GM12878 (cell line): ENCODE measurements at regions of chr4 and their contacts with region 1.

Region 1: GRCh38 chr4:26081795-26082498 is 167.9 kb downstream of the SMIM20 start:
- DNase-seq: no peak
- ATAC-seq: peak; percentile 76
- H3K4me3 ChIP-seq: no peak overlapping the region
- H3K27ac ChIP-seq: no peak overlapping the region
- H3K4me1 ChIP-seq: peaks cover 44% of the 10 kb centered on the region
- H3K27me3 ChIP-seq: no peaks in the 10 kb centered on the region
- CTCF ChIP-seq: peak; percentile 56 to 61 (median 61)
- EP300 ChIP-seq: no peak
- POLR2A ChIP-seq: no peak
- RAD21 ChIP-seq: peak; percentile 74

Region 2: DNA sequence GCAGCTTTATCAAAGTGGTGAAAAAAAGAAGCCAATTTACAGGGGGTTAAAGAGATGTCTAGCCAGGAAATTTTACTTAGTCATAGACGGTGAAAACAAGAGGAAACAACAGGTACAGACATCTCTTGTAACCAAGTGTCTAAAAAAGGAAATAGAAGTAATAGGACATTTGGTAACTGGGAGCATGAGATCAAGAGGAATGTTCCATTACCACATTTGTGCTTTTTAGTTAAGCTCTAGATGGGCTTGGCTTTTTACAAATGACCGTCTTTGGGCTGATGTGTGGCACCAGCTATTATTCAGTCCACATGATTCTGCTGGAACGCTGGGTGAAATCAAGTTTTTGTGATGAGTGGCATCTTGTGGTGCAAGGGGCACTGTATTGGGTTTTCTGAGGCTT is 11.6 kb after region 1 on chr4:
- CTCF ChIA-PET with region 1: interaction called, 11 read pairs
- POLR2A ChIA-PET with region 1: no interaction called
- RAD21 ChIA-PET with region 1: interaction called, 27 read pairs
- SMC1A ChIA-PET with region 1: interaction called, 37 read pairs
- in situ Hi-C with region 1: no loop called
- intact Hi-C with region 1: no loop called
- DNase-seq: no peak
- ATAC-seq: no peak
- H3K4me3 ChIP-seq: no peak overlapping the region
- H3K27ac ChIP-seq: no peak overlapping the region
- H3K4me1 ChIP-seq: peaks cover 6% of the 10 kb centered on the region; the same call in 1 of the 2 replicates
- H3K27me3 ChIP-seq: no peaks in the 10 kb centered on the region
- CTCF ChIP-seq: no peak
- EP300 ChIP-seq: no peak
- POLR2A ChIP-seq: no peak
- RAD21 ChIP-seq: no peak

Region 3: GRCh38 chr4:26161030-26161824 is 79.3 kb after region 1 on chr4:
- CTCF ChIA-PET with region 1: interaction called, 43 read pairs
- POLR2A ChIA-PET with region 1: no interaction called
- RAD21 ChIA-PET with region 1: interaction called, 15 read pairs
- SMC1A ChIA-PET with region 1: interaction called, 20 read pairs
- in situ Hi-C with region 1: no loop called
- intact Hi-C with region 1: no loop called
- DNase-seq: no peak
- ATAC-seq: peak; percentile 65
- H3K4me3 ChIP-seq: no peak overlapping the region
- H3K27ac ChIP-seq: no peak overlapping the region
- H3K4me1 ChIP-seq: no peaks in the 10 kb centered on the region
- H3K27me3 ChIP-seq: no peaks in the 10 kb centered on the region
- CTCF ChIP-seq: peak; percentile 12 to 27 (median 16); a peak in 2 of 6 replicates
- EP300 ChIP-seq: no peak
- POLR2A ChIP-seq: no peak
- RAD21 ChIP-seq: peak; percentile 64

Region 4: DNA sequence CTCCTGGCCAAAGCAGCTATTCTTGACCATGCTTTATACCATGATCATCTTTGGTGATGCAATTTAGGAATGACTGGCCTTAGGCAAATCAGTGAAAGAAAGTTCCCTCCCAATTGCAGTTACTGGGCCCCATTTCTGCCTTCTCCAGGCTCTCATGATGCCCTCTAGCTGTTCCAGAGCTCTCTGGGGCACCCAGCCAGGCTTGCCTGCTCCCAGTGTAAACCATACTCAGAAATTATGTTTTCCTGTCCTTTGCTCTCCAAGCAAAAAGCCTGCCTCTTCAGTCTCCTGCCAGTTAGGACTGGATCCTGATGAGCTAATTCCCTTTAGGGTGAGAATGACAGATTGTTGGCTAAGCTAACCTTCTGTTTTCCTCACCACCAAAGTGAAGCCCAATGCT is 153.6 kb after region 1 on chr4:
- CTCF ChIA-PET with region 1: interaction called, 10 read pairs
- POLR2A ChIA-PET with region 1: no interaction called
- RAD21 ChIA-PET with region 1: interaction called, 3 read pairs
- SMC1A ChIA-PET with region 1: interaction called, 5 read pairs
- in situ Hi-C with region 1: no loop called
- intact Hi-C with region 1: no loop called
- DNase-seq: no peak
- ATAC-seq: no peak
- H3K4me3 ChIP-seq: no peak overlapping the region
- H3K27ac ChIP-seq: no peak overlapping the region
- H3K4me1 ChIP-seq: no peaks in the 10 kb centered on the region
- H3K27me3 ChIP-seq: no peaks in the 10 kb centered on the region
- CTCF ChIP-seq: no peak
- EP300 ChIP-seq: no peak
- POLR2A ChIP-seq: no peak
- RAD21 ChIP-seq: no peak

Region 5: GRCh38 chr4:26325191-26325590 is 243.2 kb after region 1 on chr4:
- CTCF ChIA-PET with region 1: interaction called, 127 read pairs
- POLR2A ChIA-PET with region 1: interaction called, 4 read pairs
- RAD21 ChIA-PET with region 1: interaction called, 76 read pairs
- SMC1A ChIA-PET with region 1: interaction called, 97 read pairs
- in situ Hi-C with region 1: no loop called
- intact Hi-C with region 1: loop called (anchors 1 kb)
- DNase-seq: no peak
- ATAC-seq: peak; percentile 63
- H3K4me3 ChIP-seq: peak overlapping the region; percentile 10; the same call in 1 of the 2 replicates
- H3K27ac ChIP-seq: no peak overlapping the region
- H3K4me1 ChIP-seq: no peaks in the 10 kb centered on the region
- H3K27me3 ChIP-seq: no peaks in the 10 kb centered on the region
- CTCF ChIP-seq: peak; percentile 46 to 64 (median 56); a peak in 5 of 6 replicates
- EP300 ChIP-seq: no peak
- POLR2A ChIP-seq: no peak
- RAD21 ChIP-seq: peak; percentile 78